Activated CD4-positive, alpha-beta T cell treated with anti-CD3 and anti-CD28 coated beads, Interleukin-2, amount 10 ng/mL, durations not matched to agents 24 days and 14 days (primary cell): ENCODE measurements at regions of chr1 and their contacts with region 1.

Region 1: DNA sequence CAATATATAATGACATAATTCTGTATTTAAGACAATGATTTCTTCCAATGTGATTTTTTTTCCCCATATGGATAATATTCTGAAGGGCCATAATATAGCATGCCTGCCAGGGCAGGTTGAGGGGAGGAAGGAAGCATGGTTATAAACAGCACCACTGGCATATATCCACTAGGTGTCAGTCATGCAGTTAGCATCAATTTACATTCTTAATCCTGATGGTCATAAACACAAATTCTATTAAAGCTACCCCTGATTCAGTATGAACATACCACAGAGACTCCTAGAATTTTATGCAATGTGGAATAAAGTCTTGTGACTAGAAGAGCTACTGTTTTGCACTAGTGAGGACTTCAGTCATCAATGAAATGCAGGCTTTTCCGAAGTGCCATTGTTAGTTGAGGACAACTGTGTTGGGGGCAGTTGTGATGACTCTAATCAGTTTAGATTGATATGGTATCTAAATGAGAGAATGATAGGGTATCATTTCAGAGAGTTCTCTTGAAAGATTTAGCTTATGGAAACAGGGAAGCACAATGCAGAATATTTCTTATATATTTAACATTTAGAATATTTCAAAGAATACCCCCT is 342.7 kb upstream of the NR5A2 start:
- DNase-seq: peak; percentile 73
- H3K4me3 Mint-ChIP-seq: no peak overlapping the region
- H3K27ac Mint-ChIP-seq: no peak overlapping the region
- H3K4me1 Mint-ChIP-seq: no peaks in the 10 kb centered on the region
- H3K27me3 Mint-ChIP-seq: peaks cover 14% of the 10 kb centered on the region

Region 2: DNA sequence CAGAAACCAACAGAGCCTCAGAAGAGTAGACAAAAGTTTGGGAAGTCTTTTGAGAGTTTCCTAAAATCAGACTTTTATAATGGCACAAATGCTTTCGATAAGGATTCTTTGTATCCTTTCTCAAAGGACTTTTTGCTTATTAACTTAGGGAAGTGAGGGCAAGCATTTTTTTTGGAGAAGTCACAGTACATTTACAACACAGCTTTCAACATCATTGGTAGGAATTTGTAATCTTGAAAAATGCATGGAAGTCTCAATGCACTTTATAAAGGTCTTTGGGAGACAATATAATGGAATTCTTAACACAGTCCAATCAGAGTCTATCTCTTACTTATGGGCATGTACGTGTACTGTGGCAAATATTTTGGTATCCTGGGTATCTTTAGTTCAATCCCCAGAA is 16.9 kb after region 1 on chr1:
- intact Hi-C with region 1: no loop called
- DNase-seq: no peak
- H3K4me3 Mint-ChIP-seq: no peak overlapping the region
- H3K27ac Mint-ChIP-seq: no peak overlapping the region
- H3K4me1 Mint-ChIP-seq: no peaks in the 10 kb centered on the region
- H3K27me3 Mint-ChIP-seq: peaks cover 16% of the 10 kb centered on the region

Region 3: DNA sequence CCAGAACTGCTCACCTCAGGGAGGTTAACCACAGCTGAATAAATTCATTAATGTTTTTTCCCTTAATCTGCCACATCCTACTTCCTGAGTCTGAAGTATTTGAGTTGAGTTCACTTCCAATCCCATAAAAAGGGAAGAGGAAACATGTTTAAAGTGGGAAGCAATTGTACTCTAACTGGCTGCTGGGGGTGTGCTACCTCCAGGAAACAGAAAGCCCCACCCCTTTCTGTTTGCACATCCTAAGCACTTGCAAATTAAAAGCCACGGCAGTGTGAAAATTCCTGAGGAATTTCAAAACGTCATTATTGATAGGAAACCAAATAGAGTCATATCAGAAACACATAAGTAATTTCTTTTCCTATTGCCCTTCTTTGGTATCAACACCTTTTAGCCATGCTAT is 35.7 kb after region 1 on chr1:
- intact Hi-C with region 1: no loop called
- DNase-seq: no peak
- H3K4me3 Mint-ChIP-seq: no peak overlapping the region
- H3K27ac Mint-ChIP-seq: no peak overlapping the region
- H3K4me1 Mint-ChIP-seq: peaks cover 4% of the 10 kb centered on the region
- H3K27me3 Mint-ChIP-seq: peaks cover 10% of the 10 kb centered on the region

Region 4: DNA sequence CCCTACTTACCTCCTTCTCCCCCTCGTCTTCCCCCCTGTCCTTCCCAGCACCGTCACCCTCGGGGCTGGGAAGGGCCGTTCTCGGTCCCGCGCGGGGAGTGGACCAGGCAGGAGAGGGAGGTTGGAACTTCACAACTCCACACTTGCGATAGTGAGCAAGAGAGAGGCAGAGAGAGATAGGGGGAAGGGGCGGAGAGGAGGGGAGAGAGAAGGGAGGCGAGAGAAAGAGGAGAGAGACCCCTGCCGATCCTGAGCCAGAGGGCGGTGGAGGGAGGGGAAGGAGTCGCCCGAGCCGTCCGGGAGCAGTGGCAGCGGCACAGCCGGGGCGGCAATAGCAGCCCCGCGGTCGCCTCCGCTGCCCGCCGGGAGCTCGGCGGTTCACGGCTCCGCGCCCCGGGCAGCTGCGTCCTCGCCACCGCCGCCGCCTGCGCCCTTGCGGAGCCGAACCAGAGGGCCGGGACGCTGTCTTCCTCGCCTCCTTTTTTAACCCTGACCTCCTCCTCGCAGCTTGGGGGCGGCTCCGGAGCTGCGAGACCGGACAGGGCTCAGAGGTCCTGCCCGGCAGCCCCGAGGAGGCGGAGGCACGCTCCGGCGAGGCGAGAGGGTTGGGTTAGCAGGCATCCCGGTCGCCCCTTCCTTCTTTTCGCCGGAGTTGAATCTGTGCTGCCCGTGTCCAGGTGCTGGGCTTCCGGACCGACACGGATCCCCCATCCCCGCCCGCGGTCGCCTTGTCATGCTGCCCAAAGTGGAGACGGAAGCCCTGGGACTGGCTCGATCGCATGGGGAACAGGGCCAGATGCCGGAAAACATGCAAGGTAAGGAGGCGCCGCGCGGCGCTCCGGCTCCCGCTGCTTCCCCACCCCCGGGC is 354.4 kb after region 1 on chr1:
- intact Hi-C with region 1: loop called (anchors 10 kb)
- DNase-seq: peak; percentile 72
- H3K4me3 Mint-ChIP-seq: peak overlapping the region; percentile 75
- H3K27ac Mint-ChIP-seq: no peak overlapping the region
- H3K4me1 Mint-ChIP-seq: peaks cover 14% of the 10 kb centered on the region
- H3K27me3 Mint-ChIP-seq: peaks cover 43% of the 10 kb centered on the region

Region 5: GRCh38 chr1:200279810-200280411 is 595.1 kb after region 1 on chr1:
- intact Hi-C with region 1: loop called (anchors 10 kb)
- DNase-seq: peak; percentile 79
- H3K4me3 Mint-ChIP-seq: no peak overlapping the region
- H3K27ac Mint-ChIP-seq: no peak overlapping the region
- H3K4me1 Mint-ChIP-seq: no peaks in the 10 kb centered on the region
- H3K27me3 Mint-ChIP-seq: peaks cover 14% of the 10 kb centered on the region

Region 6: GRCh38 chr1:200488375-200489165 is 803.8 kb after region 1 on chr1:
- intact Hi-C with region 1: loop called (anchors 5 kb)
- DNase-seq: peak; percentile 85
- H3K4me3 Mint-ChIP-seq: no peak overlapping the region
- H3K27ac Mint-ChIP-seq: no peak overlapping the region
- H3K4me1 Mint-ChIP-seq: peaks cover 15% of the 10 kb centered on the region
- H3K27me3 Mint-ChIP-seq: peaks cover 31% of the 10 kb centered on the region

Region 7: GRCh38 chr1:200802865-200803512 is 1118.2 kb after region 1 on chr1:
- intact Hi-C with region 1: loop called (anchors 10 kb)
- DNase-seq: peak; percentile 91
- H3K4me3 Mint-ChIP-seq: no peak overlapping the region
- H3K27ac Mint-ChIP-seq: no peak overlapping the region
- H3K4me1 Mint-ChIP-seq: peaks cover 2% of the 10 kb centered on the region
- H3K27me3 Mint-ChIP-seq: peaks cover 20% of the 10 kb centered on the region